ENCODE measurements at regions of chr12 and their contacts with region 1.

Region 1: DNA sequence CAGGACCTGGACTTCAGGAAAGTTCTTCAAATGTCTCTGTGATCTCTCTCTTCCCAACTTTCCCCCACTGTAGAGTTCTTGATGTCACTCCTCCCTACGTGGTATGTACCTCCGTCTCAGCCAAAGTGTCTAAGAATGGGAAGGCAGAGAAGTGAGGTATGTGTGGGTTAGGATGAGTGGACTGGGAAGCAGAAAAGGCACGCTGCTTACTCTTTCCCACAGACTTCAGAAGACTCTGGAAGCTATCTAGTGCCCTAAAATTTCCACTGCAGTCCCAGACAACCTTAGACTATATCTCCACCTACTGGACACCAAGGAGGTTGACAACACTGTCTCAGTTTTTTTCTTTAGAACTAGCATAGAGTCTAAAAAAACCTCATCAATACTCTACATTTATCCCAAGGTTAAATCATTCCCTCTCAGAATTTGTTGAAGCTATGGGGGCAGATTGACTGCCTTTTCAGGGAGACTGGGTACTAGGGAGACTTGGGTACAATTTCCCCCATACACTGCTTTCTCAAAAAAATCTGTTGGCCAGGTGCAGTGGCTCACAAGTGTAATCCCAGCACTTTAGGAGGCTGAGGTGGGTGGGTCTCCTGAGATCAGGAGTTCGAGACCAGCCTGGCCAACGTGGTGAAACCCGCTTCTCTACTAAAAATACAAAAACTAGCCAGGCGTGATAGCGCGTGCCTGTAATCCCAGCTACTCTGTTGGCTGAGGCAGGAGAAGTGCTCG is 20.6 kb upstream of the ITGA5 start:
- DNase-seq: no peak
- ATAC-seq: peak; percentile 92 to 94

Region 2: DNA sequence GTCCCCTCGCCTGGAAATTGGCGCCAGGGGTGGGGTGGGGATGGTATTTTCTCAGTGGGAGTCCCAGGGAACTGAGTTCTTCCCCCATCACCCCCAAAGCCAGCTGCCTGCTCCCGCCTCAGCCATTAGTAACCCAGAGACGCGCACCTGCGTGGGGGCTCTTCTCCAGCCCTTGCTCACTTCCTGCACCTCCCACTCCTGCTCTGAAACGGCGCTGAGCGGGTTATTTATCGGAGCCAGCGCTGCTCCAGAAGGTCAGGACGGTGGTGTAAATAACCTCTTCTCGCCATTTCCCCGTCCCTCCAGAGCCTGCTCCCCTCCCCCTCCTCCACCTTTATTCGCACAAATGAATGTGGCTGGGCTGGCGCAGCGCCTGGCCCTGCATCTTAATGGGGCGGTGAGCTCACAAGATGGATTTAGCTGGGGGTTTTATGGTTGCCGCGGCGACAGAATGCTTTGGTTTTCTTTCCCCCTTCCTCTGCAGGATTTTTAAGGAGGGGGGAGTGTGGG is 87.6 kb before region 1 on chr12:
- intact Hi-C with region 1: no loop called
- DNase-seq: peak; percentile 43
- ATAC-seq: peak; percentile 51 to 67

Region 3: GRCh38 chr12:54398995-54399793 is 40.5 kb before region 1 on chr12:
- intact Hi-C with region 1: loop called (anchors 1 to 5 kb)
- DNase-seq: peak; percentile 87
- ATAC-seq: peak; percentile 83 to 90

Region 4: GRCh38 chr12:54404061-54405004 is 35.4 kb before region 1 on chr12:
- intact Hi-C with region 1: loop called (anchors 1 to 5 kb)
- DNase-seq: no peak
- ATAC-seq: no peak